ENCODE measurements at regions of chr7 and their contacts with region 1.

Region 1: GRCh38 chr7:66557608-66558143 is 71.0 kb upstream of the KCTD7 start:
- DNase-seq: peak; percentile 39 to 83 (median 68)
- ATAC-seq: peak; percentile 89
- H3K4me3 ChIP-seq: no peak overlapping the region
- H3K4me3 Mint-ChIP-seq: no peak overlapping the region
- H3K27ac ChIP-seq: no peak overlapping the region
- H3K27ac Mint-ChIP-seq: peak overlapping the region in 2 of 9 donors; percentile 51
- H3K4me1 ChIP-seq: peaks cover 0 to 4% of the 10 kb centered on the region in 2 donors
- H3K4me1 Mint-ChIP-seq: peaks cover 0 to 7% (median 4%) of the 10 kb centered on the region in 7 donors
- H3K27me3 ChIP-seq: no peaks in the 10 kb centered on the region
- H3K27me3 Mint-ChIP-seq: no peaks in the 10 kb centered on the region

Region 2: DNA sequence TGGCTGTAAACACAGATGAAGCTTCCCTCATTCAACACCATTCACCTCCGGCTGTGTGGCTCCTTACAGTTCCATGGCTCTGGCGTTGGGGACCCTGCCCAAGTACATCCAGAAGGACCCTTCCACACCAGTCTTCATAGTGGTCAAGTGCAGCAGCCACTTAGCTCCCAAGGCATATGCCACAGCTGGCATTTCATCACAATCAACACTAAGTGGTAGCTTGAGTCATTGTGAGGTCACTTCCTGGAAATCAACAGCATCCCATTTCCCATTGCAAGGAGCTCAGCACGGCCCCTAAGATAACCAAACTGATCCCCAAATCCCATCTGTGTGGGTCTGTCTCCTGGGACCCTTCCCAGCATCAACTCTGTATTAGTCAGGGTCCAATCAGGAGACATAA is 177.9 kb before region 1 on chr7:
- CTCF ChIA-PET with region 1: no interaction called
- POLR2A ChIA-PET with region 1: no interaction called
- intact Hi-C with region 1: no loop called
- DNase-seq: no peak
- ATAC-seq: no peak
- H3K4me3 ChIP-seq: no peak overlapping the region
- H3K4me3 Mint-ChIP-seq: no peak overlapping the region
- H3K27ac ChIP-seq: no peak overlapping the region
- H3K27ac Mint-ChIP-seq: no peak overlapping the region
- H3K4me1 ChIP-seq: no peaks in the 10 kb centered on the region
- H3K4me1 Mint-ChIP-seq: peaks cover 0 to 4% (median 0%) of the 10 kb centered on the region in 7 donors
- H3K27me3 ChIP-seq: no peaks in the 10 kb centered on the region
- H3K27me3 Mint-ChIP-seq: no peaks in the 10 kb centered on the region

Region 3: GRCh38 chr7:66643395-66643794 is 85.7 kb after region 1 on chr7:
- CTCF ChIA-PET with region 1: interaction called, 3 read pairs
- POLR2A ChIA-PET with region 1: no interaction called
- intact Hi-C with region 1: loop called in 1 of 2 experiments (anchors 1 kb)
- DNase-seq: no peak
- ATAC-seq: no peak
- H3K4me3 ChIP-seq: no peak overlapping the region
- H3K4me3 Mint-ChIP-seq: no peak overlapping the region
- H3K27ac ChIP-seq: no peak overlapping the region
- H3K27ac Mint-ChIP-seq: peak overlapping the region in 3 of 9 donors; percentile 18 to 70 (median 67)
- H3K4me1 ChIP-seq: no peaks in the 10 kb centered on the region
- H3K4me1 Mint-ChIP-seq: peaks cover 4 to 17% (median 7%) of the 10 kb centered on the region in 7 donors
- H3K27me3 ChIP-seq: no peaks in the 10 kb centered on the region
- H3K27me3 Mint-ChIP-seq: no peaks in the 10 kb centered on the region

Region 4: DNA sequence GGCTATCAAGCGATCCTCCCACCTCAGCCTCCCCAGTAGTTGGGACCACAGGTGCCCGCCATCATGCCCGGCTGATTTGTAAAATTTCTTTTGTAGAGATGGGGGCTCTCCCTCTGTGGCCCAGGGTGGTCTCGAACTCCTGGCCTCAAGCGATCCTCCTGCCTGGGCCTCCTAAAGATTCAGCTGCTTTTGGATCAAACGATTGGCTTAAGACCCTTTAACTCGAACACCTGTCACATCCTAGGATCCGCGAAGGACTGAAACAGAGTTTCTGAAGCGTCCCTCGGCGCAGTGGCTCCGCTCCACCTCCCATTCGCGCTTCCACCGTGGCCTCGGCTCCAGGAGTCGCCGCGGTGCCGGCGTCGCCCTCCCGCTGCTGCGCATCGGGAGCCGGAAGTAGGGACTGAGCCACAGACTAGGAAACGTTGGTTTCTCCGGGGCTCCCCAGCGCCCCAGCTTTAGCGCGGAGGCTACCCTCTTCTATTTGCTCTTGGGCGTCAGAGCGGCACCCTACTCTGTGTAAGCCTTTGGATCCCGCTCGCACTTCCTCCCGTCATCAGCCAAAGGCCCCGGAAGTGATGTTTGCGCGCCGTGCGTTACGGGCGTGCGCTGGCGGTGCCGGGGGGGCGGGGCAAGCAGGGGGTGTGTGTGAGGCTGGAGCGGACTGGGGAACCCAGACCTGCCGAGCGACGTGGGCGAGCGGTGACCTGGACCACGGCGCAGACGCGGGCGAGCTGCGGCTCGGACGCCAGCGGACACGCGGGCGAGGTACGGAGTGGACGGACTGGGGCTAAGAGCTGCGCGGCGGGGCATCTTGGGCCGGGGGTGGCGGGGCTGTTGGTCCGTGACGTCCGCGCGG is 124.0 kb after region 1 on chr7:
- CTCF ChIA-PET with region 1: no interaction called
- POLR2A ChIA-PET with region 1: no interaction called
- intact Hi-C with region 1: loop called (anchors 1 to 10 kb)
- DNase-seq: peak; percentile 92 to 97 (median 95)
- ATAC-seq: peak; percentile 98
- H3K4me3 ChIP-seq: peak overlapping the region; percentile 96
- H3K4me3 Mint-ChIP-seq: peak overlapping the region; percentile 82 to 96 (median 92)
- H3K27ac ChIP-seq: peak overlapping the region; percentile 95
- H3K27ac Mint-ChIP-seq: peak overlapping the region; percentile 86 to 98 (median 97)
- H3K4me1 ChIP-seq: peaks cover 5 to 11% of the 10 kb centered on the region in 2 donors
- H3K4me1 Mint-ChIP-seq: peaks cover 7 to 59% (median 31%) of the 10 kb centered on the region in 7 donors
- H3K27me3 ChIP-seq: no peaks in the 10 kb centered on the region
- H3K27me3 Mint-ChIP-seq: no peaks in the 10 kb centered on the region

Region 5: GRCh38 chr7:66740302-66740979 is 182.8 kb after region 1 on chr7 and contains the start of gene RABGEF1:
- CTCF ChIA-PET with region 1: no interaction called
- POLR2A ChIA-PET with region 1: no interaction called
- intact Hi-C with region 1: loop called (anchors 1 kb)
- DNase-seq: peak; percentile 94 to 98 (median 95)
- ATAC-seq: peak; percentile 95
- H3K4me3 ChIP-seq: peak within 1 kb of the TSS; percentile 82
- H3K4me3 Mint-ChIP-seq: peak within 1 kb of the TSS; percentile 89 to 98 (median 94)
- H3K27ac ChIP-seq: peak within 1 kb of the TSS; percentile 84
- H3K27ac Mint-ChIP-seq: peak within 1 kb of the TSS; percentile 94 to 98 (median 96)
- H3K4me1 ChIP-seq: peaks cover 0 to 6% of the 10 kb centered on the region in 2 donors
- H3K4me1 Mint-ChIP-seq: peaks cover 30 to 74% (median 54%) of the 10 kb centered on the region in 7 donors
- H3K27me3 ChIP-seq: no peaks in the 10 kb centered on the region
- H3K27me3 Mint-ChIP-seq: no peaks in the 10 kb centered on the region
- total RNA-seq, gene RABGEF1: 20.7 to 35.7 (median 22.2) TPM

Region 6: GRCh38 chr7:66779669-66780409 is 222.2 kb after region 1 on chr7:
- CTCF ChIA-PET with region 1: no interaction called
- POLR2A ChIA-PET with region 1: no interaction called
- intact Hi-C with region 1: loop called in 1 of 2 experiments (anchors 10 kb)
- DNase-seq: no peak
- ATAC-seq: no peak
- H3K4me3 ChIP-seq: no peak overlapping the region
- H3K4me3 Mint-ChIP-seq: no peak overlapping the region
- H3K27ac ChIP-seq: no peak overlapping the region
- H3K27ac Mint-ChIP-seq: no peak overlapping the region
- H3K4me1 ChIP-seq: no peaks in the 10 kb centered on the region
- H3K4me1 Mint-ChIP-seq: peaks cover 0 to 15% (median 5%) of the 10 kb centered on the region in 7 donors
- H3K27me3 ChIP-seq: no peaks in the 10 kb centered on the region
- H3K27me3 Mint-ChIP-seq: no peaks in the 10 kb centered on the region

Region 7: GRCh38 chr7:67625257-67625737 is 1067.6 kb after region 1 on chr7:
- CTCF ChIA-PET with region 1: no interaction called
- POLR2A ChIA-PET with region 1: no interaction called
- intact Hi-C with region 1: no loop called
- DNase-seq: peak in 2 of 9 donors; percentile 10 to 22
- ATAC-seq: peak; percentile 41
- H3K4me3 ChIP-seq: no peak overlapping the region
- H3K4me3 Mint-ChIP-seq: no peak overlapping the region
- H3K27ac ChIP-seq: no peak overlapping the region
- H3K27ac Mint-ChIP-seq: no peak overlapping the region
- H3K4me1 ChIP-seq: no peaks in the 10 kb centered on the region
- H3K4me1 Mint-ChIP-seq: peaks cover 0 to 8% (median 5%) of the 10 kb centered on the region in 7 donors
- H3K27me3 ChIP-seq: no peaks in the 10 kb centered on the region
- H3K27me3 Mint-ChIP-seq: peaks cover 0 to 26% (median 17%) of the 10 kb centered on the region in 5 donors